ENCODE measurements at regions of chr1 and their contacts with region 1.

Region 1: GRCh38 chr1:218496561-218496960 is 151.4 kb downstream of the TGFB2 start:
- DNase-seq: peak; percentile 46 to 57
- H3K4me3 ChIP-seq: no peak overlapping the region
- H3K4me3 Mint-ChIP-seq: no peak overlapping the region
- H3K27ac Mint-ChIP-seq: peak overlapping the region; percentile 59
- H3K4me1 ChIP-seq: peaks cover 47% of the 10 kb centered on the region
- H3K4me1 Mint-ChIP-seq: peaks cover 34% of the 10 kb centered on the region
- H3K27me3 ChIP-seq: no peaks in the 10 kb centered on the region
- H3K27me3 Mint-ChIP-seq: no peaks in the 10 kb centered on the region
- CTCF ChIP-seq: no peak

Region 2: DNA sequence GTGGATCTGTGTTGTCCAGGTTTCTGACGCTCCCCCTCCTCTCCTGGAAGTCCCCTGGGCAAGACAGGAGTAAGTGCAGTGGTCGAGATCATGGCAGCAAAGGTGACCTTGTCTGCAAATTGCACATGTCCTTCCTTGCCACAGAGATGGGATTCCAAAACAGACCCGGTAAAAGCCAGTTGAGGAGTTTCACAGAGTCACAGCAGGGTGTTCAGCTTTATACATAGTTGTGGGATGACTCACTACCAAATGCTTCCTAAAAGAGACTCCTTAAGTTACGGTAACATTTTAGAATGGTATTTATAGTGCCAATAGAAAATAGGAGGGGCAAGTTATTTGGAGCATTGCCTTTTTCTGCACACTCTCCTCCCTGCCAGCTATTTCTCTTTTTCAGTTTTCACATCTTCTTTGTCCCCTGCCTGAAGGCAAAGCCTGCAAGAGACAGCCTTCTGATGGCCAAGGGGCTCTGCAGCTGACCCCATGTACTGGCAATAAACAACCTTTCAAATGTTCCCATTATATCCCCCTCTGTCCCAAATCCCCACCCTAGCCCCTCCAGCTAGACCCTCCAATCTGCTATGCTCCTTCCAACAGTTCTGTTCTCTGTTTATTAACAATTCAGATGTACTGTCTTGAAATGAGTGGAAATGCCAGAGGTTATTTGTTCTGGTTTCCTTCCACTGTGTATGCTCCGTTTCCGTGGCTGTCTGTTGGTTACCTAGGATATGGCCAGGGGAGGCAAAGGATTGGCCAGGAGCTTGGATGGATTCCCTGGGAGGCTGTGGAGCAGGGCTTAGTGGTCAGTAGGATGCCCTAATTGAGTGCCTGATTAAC is 36.5 kb before region 1 on chr1:
- CTCF ChIA-PET with region 1: no interaction called
- POLR2A ChIA-PET with region 1: no interaction called
- intact Hi-C with region 1: no loop called
- DNase-seq: peak; percentile 35 to 45
- H3K4me3 ChIP-seq: no peak overlapping the region
- H3K4me3 Mint-ChIP-seq: peak overlapping the region; percentile 4
- H3K27ac Mint-ChIP-seq: peak overlapping the region; percentile 71
- H3K4me1 ChIP-seq: peaks cover 29% of the 10 kb centered on the region
- H3K4me1 Mint-ChIP-seq: peaks cover 35% of the 10 kb centered on the region
- H3K27me3 ChIP-seq: no peaks in the 10 kb centered on the region
- H3K27me3 Mint-ChIP-seq: no peaks in the 10 kb centered on the region
- CTCF ChIP-seq: no peak

Region 3: GRCh38 chr1:218527737-218528136 is 31.2 kb after region 1 on chr1:
- CTCF ChIA-PET with region 1: no interaction called
- POLR2A ChIA-PET with region 1: no interaction called
- intact Hi-C with region 1: loop called (anchors 1 kb)
- DNase-seq: no peak
- H3K4me3 ChIP-seq: no peak overlapping the region
- H3K4me3 Mint-ChIP-seq: no peak overlapping the region
- H3K27ac Mint-ChIP-seq: no peak overlapping the region
- H3K4me1 ChIP-seq: peaks cover 19% of the 10 kb centered on the region
- H3K4me1 Mint-ChIP-seq: peaks cover 28% of the 10 kb centered on the region
- H3K27me3 ChIP-seq: no peaks in the 10 kb centered on the region
- H3K27me3 Mint-ChIP-seq: no peaks in the 10 kb centered on the region
- CTCF ChIP-seq: no peak